ENCODE measurements at regions of chr14 and their contacts with region 1.

Region 1: DNA sequence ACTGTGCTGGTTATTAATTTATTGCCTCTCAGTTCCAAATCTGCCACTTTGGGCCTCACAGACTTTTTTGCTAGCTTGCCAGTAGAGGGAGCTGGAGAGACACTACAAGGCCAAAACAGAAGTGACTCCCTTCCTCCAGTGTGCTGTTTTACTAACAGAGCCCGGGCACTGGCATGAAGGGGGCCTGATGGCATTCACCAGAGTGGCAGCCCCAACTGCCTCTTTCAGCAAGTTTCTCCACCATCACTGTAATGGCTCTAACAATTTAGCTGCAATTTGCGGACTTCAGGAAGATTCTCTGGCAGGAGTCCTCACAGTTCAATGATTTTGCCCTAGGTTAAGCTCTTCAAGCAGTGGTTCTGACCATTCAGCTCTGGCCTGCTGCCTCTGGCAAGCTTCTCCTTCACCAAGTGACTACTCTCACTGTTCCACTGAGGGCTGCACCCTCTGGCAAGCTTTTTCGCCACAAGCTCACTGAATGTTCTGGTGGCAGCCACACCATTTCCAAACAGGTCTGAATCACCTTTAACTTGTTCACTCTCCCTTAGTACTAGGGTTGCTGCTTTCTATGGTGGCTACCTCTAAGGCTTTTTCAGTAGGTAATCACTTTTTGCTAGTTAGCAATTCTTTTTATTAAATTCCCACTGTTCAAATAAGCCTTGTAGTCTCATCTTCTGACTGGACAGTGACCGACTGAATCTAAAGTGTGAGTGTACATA is 104.9 kb downstream of the ZC3H14 start:
- DNase-seq: peak in 8 of 9 donors; percentile 26 to 71 (median 60)
- ATAC-seq: peak; percentile 78
- H3K4me3 ChIP-seq: no peak overlapping the region
- H3K4me3 Mint-ChIP-seq: no peak overlapping the region
- H3K27ac ChIP-seq: no peak overlapping the region
- H3K27ac Mint-ChIP-seq: no peak overlapping the region
- H3K4me1 ChIP-seq: no peaks in the 10 kb centered on the region
- H3K4me1 Mint-ChIP-seq: peaks cover 0 to 7% (median 0%) of the 10 kb centered on the region in 7 donors
- H3K27me3 ChIP-seq: no peaks in the 10 kb centered on the region
- H3K27me3 Mint-ChIP-seq: no peaks in the 10 kb centered on the region

Region 2: GRCh38 chr14:88492272-88493089 is 175.2 kb before region 1 on chr14:
- CTCF ChIA-PET with region 1: no interaction called
- POLR2A ChIA-PET with region 1: no interaction called
- intact Hi-C with region 1: loop called in 1 of 2 experiments (anchors 2 kb)
- DNase-seq: peak in 8 of 9 donors; percentile 36 to 73 (median 58)
- ATAC-seq: peak; percentile 90
- H3K4me3 ChIP-seq: no peak overlapping the region
- H3K4me3 Mint-ChIP-seq: no peak overlapping the region
- H3K27ac ChIP-seq: no peak overlapping the region
- H3K27ac Mint-ChIP-seq: no peak overlapping the region
- H3K4me1 ChIP-seq: no peaks in the 10 kb centered on the region
- H3K4me1 Mint-ChIP-seq: peaks cover 0 to 7% (median 0%) of the 10 kb centered on the region in 7 donors
- H3K27me3 ChIP-seq: no peaks in the 10 kb centered on the region
- H3K27me3 Mint-ChIP-seq: peaks cover 0 to 6% (median 4%) of the 10 kb centered on the region in 5 donors

Region 3: DNA sequence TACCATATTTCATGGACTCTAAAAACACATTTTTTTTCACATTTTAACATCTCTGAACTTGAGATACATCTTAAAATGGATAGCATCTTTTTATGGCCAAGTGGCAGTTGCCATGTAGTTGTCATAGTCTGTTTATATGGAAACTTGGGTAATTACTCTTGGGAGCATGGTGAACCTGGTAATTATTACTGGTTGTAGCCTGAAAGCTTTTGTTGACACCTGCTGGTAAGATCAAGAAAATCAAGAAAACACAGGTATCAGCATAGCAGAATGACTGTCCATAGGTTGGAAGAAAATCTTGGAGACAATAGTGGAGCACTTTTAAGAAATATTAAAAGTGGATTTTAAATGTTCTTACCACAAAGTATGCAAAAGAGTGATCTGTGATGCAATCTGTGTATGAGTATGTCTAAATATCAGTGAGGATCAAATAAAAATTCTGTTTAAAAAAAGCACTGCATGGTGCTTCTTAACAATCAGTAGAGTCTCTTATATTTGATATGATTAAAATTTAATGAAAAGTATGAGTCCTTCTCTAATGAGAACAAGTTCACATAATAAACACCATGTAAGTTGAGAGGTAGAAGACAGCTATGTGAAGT is 200.9 kb after region 1 on chr14:
- CTCF ChIA-PET with region 1: interaction called, 38 read pairs
- POLR2A ChIA-PET with region 1: no interaction called
- intact Hi-C with region 1: loop called (anchors 1 kb)
- DNase-seq: peak in 5 of 9 donors; percentile 3 to 27 (median 10)
- ATAC-seq: no peak
- H3K4me3 ChIP-seq: no peak overlapping the region
- H3K4me3 Mint-ChIP-seq: no peak overlapping the region
- H3K27ac ChIP-seq: no peak overlapping the region
- H3K27ac Mint-ChIP-seq: no peak overlapping the region
- H3K4me1 ChIP-seq: no peaks in the 10 kb centered on the region
- H3K4me1 Mint-ChIP-seq: no peaks in the 10 kb centered on the region
- H3K27me3 ChIP-seq: no peaks in the 10 kb centered on the region
- H3K27me3 Mint-ChIP-seq: no peaks in the 10 kb centered on the region

Region 4: DNA sequence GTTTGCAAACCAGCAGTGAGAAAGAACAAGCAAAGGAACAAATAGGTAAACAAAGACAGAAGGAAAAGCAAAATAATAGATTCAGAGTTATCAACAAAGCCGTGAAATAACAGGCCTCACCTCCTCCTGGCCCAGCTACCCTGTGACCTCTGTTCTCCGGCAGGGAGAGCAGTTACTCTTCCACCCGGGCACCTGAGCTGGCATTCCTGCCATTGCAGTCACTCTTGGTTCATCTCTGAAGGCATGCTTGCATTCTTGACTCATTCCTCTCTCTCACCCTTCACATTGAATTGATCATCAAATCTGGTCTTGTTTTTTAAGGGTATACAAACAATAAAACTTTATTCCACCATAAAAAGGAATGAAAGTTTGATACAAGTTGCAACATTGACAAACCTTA is 251.8 kb after region 1 on chr14:
- CTCF ChIA-PET with region 1: no interaction called
- POLR2A ChIA-PET with region 1: no interaction called
- intact Hi-C with region 1: no loop called
- DNase-seq: no peak
- ATAC-seq: no peak
- H3K4me3 ChIP-seq: no peak overlapping the region
- H3K4me3 Mint-ChIP-seq: no peak overlapping the region
- H3K27ac ChIP-seq: no peak overlapping the region
- H3K27ac Mint-ChIP-seq: no peak overlapping the region
- H3K4me1 ChIP-seq: no peaks in the 10 kb centered on the region
- H3K4me1 Mint-ChIP-seq: no peaks in the 10 kb centered on the region
- H3K27me3 ChIP-seq: no peaks in the 10 kb centered on the region
- H3K27me3 Mint-ChIP-seq: peaks cover 0 to 41% (median 32%) of the 10 kb centered on the region in 5 donors

Region 5: DNA sequence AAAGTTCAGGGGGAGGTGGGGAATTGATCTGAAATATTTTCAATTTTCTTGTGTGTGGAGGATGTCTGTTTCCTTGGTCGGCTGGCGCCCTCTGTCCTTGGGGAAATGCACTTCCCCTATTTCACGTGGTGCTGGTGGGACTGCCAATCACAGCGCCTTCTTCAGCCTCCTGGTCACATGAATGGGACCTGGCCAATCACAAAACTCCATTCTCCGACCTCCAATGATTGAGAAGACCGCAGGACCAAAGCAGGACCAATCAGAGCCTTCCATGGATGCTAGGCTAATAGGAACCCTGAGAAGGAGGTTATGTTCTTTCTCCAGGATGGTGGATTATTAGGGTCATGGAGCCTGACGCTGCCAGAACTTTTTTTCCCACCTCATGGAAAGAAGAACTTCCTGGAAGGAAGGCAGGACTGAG is 345.4 kb after region 1 on chr14:
- CTCF ChIA-PET with region 1: no interaction called
- POLR2A ChIA-PET with region 1: no interaction called
- intact Hi-C with region 1: loop called (anchors 5 to 10 kb)
- DNase-seq: peak in 1 of 9 donors; percentile 12
- ATAC-seq: no peak
- H3K4me3 ChIP-seq: no peak overlapping the region
- H3K4me3 Mint-ChIP-seq: no peak overlapping the region
- H3K27ac ChIP-seq: no peak overlapping the region
- H3K27ac Mint-ChIP-seq: no peak overlapping the region
- H3K4me1 ChIP-seq: no peaks in the 10 kb centered on the region
- H3K4me1 Mint-ChIP-seq: peaks cover 0 to 4% (median 0%) of the 10 kb centered on the region in 7 donors
- H3K27me3 ChIP-seq: no peaks in the 10 kb centered on the region
- H3K27me3 Mint-ChIP-seq: peaks cover 14 to 24% (median 15%) of the 10 kb centered on the region in 5 donors

Region 6: DNA sequence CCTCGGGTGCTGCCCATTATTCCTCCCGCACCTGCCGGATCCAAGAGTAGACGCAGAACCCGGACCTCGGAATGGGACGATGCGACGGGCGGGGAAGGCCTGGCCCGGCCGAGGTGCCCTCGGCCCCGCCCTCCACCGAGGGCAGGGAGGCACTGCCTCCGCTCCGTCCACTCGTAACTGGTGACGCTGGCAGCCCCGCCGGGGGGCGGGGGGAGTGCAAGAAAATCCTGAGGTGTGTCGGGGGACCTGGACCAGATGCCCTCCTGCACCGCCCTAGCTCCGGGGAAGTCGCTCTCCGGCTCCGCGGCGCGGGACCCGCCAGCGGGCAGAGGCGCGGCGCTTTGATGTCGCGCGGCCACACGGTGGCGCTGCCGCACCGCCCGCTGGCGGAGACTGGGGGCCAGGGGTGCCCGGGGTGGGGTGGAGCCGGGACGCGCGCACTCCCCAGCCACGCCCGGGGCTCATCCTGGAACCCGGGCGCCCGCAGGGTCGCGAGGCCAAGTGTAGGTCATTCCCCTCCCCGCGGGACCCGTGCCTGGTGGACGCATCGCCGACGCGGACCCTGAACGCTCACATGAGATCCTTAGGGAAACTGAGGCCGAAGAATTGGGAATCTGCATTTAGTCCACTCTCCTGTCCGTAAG is 359.5 kb after region 1 on chr14:
- CTCF ChIA-PET with region 1: no interaction called
- POLR2A ChIA-PET with region 1: no interaction called
- intact Hi-C with region 1: loop called in 1 of 2 experiments (anchors 5 kb)
- DNase-seq: peak; percentile 32 to 76 (median 63)
- ATAC-seq: peak; percentile 92
- H3K4me3 ChIP-seq: peak overlapping the region; percentile 66
- H3K4me3 Mint-ChIP-seq: peak overlapping the region; percentile 65 to 79 (median 68)
- H3K27ac ChIP-seq: no peak overlapping the region
- H3K27ac Mint-ChIP-seq: no peak overlapping the region
- H3K4me1 ChIP-seq: peaks cover 4 to 5% of the 10 kb centered on the region in 2 donors
- H3K4me1 Mint-ChIP-seq: peaks cover 0 to 7% (median 0%) of the 10 kb centered on the region in 7 donors
- H3K27me3 ChIP-seq: peaks cover 0 to 15% of the 10 kb centered on the region in 2 donors
- H3K27me3 Mint-ChIP-seq: peaks cover 63 to 79% (median 67%) of the 10 kb centered on the region in 5 donors

Region 7: GRCh38 chr14:89779712-89780111 is 1112.0 kb after region 1 on chr14:
- CTCF ChIA-PET with region 1: no interaction called
- POLR2A ChIA-PET with region 1: no interaction called
- intact Hi-C with region 1: loop called in 1 of 2 experiments (anchors 5 kb)
- DNase-seq: no peak
- ATAC-seq: no peak
- H3K4me3 ChIP-seq: no peak overlapping the region
- H3K4me3 Mint-ChIP-seq: no peak overlapping the region
- H3K27ac ChIP-seq: no peak overlapping the region
- H3K27ac Mint-ChIP-seq: no peak overlapping the region
- H3K4me1 ChIP-seq: no peaks in the 10 kb centered on the region
- H3K4me1 Mint-ChIP-seq: peaks cover 0 to 3% (median 0%) of the 10 kb centered on the region in 7 donors
- H3K27me3 ChIP-seq: no peaks in the 10 kb centered on the region
- H3K27me3 Mint-ChIP-seq: peaks cover 0 to 8% (median 0%) of the 10 kb centered on the region in 5 donors

Region 8: GRCh38 chr14:89915114-89915878 is 1247.6 kb after region 1 on chr14:
- CTCF ChIA-PET with region 1: no interaction called
- POLR2A ChIA-PET with region 1: no interaction called
- intact Hi-C with region 1: loop called (anchors 1 to 5 kb)
- DNase-seq: peak in 8 of 9 donors; percentile 22 to 65 (median 50)
- ATAC-seq: peak; percentile 65
- H3K4me3 ChIP-seq: no peak overlapping the region
- H3K4me3 Mint-ChIP-seq: no peak overlapping the region
- H3K27ac ChIP-seq: no peak overlapping the region
- H3K27ac Mint-ChIP-seq: no peak overlapping the region
- H3K4me1 ChIP-seq: peaks cover 0 to 4% of the 10 kb centered on the region in 2 donors
- H3K4me1 Mint-ChIP-seq: peaks cover 0 to 4% (median 3%) of the 10 kb centered on the region in 7 donors
- H3K27me3 ChIP-seq: no peaks in the 10 kb centered on the region
- H3K27me3 Mint-ChIP-seq: peaks cover 0 to 22% (median 11%) of the 10 kb centered on the region in 5 donors